Activated CD4-positive, alpha-beta T cell treated with anti-CD3 and anti-CD28 coated beads, Interleukin-2, amount 10 ng/mL, durations not matched to agents 7 days and 5 days (primary cell): ENCODE measurements at regions of chr12 and their contacts with region 1.

Region 1: DNA sequence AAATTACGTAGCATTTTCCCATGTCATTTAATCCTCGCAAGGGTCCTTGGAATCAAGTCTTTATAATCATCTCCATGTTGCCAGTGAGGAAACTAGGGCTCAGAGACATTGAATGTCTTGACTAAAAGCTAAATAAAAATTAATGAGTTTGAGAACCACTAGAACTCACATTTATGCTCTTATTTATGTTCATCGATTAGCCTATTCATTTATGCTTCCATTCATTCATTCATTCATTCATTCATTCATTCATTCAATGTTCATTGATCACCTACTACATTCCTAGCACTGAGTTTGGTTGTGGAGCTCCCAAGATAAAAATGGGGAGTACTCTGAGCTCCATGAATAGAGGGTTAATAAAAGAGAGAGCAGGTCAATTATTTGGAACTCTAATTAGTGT is 59.7 kb downstream of the KCNA1 start:
- DNase-seq: no peak
- H3K4me3 Mint-ChIP-seq: no peak overlapping the region
- H3K27ac Mint-ChIP-seq: no peak overlapping the region
- H3K4me1 Mint-ChIP-seq: no peaks in the 10 kb centered on the region
- H3K27me3 Mint-ChIP-seq: peaks cover 16% of the 10 kb centered on the region

Region 2: DNA sequence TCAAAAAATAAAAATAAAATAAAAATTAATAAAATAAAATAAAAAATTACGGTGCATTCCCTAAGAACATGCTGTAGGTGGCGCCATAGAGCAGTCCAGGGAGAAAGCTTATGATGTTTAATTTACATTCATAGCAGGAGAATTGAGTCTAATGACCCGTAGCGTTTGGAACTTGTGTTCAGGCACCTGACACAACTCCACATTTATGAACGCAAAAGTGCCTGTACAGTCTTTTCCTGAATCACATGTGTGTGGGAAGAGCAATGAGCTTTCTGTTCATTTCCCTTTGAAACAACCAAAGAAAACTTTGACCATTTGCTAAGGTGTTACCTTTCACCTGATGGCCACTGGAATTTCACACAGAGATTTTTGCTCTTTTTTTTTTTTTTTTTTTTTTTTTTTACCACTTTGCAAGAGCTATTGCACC is 120.3 kb before region 1 on chr12:
- CTCF ChIA-PET with region 1: interaction called, 10 read pairs
- POLR2A ChIA-PET with region 1: no interaction called
- DNase-seq: no peak
- H3K4me3 Mint-ChIP-seq: no peak overlapping the region
- H3K27ac Mint-ChIP-seq: no peak overlapping the region
- H3K4me1 Mint-ChIP-seq: no peaks in the 10 kb centered on the region
- H3K27me3 Mint-ChIP-seq: peaks cover 14% of the 10 kb centered on the region

Region 3: GRCh38 chr12:4997939-4998338 is 28.5 kb after region 1 on chr12:
- CTCF ChIA-PET with region 1: no interaction called
- POLR2A ChIA-PET with region 1: no interaction called
- DNase-seq: no peak
- H3K4me3 Mint-ChIP-seq: no peak overlapping the region
- H3K27ac Mint-ChIP-seq: no peak overlapping the region
- H3K4me1 Mint-ChIP-seq: no peaks in the 10 kb centered on the region
- H3K27me3 Mint-ChIP-seq: no peaks in the 10 kb centered on the region